Aorta (tissue), 5 donors: ENCODE measurements at regions of chr5 and their contacts with region 1.

Region 1: GRCh38 chr5:67209142-67209771 is 12.7 kb upstream of the CD180 start:
- DNase-seq: peak in 1 of 2 donors; percentile 64
- ATAC-seq: peak; percentile 85
- H3K4me3 ChIP-seq: no peak overlapping the region
- H3K27ac ChIP-seq: no peak overlapping the region
- H3K4me1 ChIP-seq: no peaks in the 10 kb centered on the region
- H3K27me3 ChIP-seq: no peaks in the 10 kb centered on the region

Region 2: DNA sequence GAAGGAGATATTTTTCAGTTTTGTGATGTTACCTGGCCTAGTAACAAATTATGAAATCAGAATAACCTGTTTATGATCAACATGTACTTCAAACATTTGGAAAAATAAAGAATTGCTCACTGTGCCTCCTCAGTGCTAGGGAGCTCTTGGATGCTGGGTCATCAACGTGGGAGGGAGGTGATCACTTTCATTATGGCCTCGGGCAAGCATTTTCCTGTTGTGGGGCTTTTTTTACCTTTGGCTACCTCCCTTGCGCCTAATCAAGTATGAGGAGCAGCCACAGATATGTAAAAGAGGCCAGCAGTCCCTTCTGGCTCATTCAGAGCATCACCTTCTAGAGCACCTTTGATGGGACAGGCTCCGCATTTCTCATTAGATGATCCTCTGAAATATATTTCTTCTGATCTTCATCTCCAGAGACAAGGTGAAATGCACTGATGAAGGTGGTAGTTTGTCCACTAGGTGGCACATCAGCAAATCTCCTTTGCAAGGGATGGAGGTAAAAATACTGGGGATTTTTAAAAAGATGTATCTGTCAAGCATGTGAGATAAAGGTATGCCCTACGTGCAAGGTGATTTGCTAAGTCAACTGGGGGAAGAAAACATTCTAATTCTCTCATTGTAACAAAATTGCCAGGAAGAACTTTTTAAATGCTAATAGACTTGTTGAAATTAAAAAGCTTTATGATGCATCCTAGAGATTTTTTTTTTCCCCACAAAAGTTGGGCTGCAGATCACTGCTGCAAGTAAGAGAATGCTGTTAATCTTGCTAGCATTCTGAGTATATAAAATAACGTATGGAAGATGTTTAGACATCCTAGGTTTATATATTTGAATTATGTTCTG is 394.9 kb before region 1 on chr5:
- intact Hi-C with region 1: loop called (anchors 2 kb)
- DNase-seq: no peak
- ATAC-seq: no peak
- H3K4me3 ChIP-seq: no peak overlapping the region
- H3K27ac ChIP-seq: no peak overlapping the region
- H3K4me1 ChIP-seq: no peaks in the 10 kb centered on the region
- H3K27me3 ChIP-seq: no peaks in the 10 kb centered on the region

Region 3: DNA sequence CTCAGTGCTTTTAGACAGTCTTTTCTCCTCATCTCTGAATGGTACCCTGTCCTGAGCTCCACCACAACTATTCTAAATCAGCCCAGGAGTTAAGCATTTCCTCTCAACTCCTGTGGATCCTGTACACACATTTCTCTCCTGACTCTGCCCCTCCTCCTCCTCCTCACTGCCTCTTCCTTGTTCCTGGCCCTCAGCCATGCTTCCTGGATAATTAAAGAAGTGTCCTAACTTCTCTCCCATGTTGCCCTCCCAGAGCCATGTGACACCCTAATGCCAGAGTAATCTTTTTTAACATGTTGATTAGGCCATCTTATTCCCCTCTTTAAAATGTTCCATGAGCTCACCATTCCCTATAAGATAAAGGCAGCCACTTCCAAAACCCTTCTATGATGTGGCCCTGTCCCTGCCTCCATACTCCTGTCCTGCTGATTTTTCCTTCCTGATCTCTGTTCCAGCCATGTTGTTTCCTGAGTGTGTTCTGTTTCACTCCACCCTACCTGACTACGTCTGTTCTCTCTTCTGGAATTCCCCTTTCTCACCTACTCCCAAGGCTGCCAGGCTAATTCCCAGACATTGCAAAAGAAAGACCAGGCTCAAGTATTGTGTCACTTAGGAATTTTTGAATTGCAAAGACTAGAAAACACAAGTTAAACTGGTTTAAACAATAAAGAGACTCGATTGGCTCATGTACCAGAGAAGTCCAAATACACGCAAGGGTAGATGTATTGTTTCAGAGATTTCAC is 317.9 kb before region 1 on chr5:
- intact Hi-C with region 1: no loop called
- DNase-seq: no peak
- ATAC-seq: no peak
- H3K4me3 ChIP-seq: no peak overlapping the region
- H3K27ac ChIP-seq: no peak overlapping the region
- H3K4me1 ChIP-seq: no peaks in the 10 kb centered on the region
- H3K27me3 ChIP-seq: no peaks in the 10 kb centered on the region

Region 4: GRCh38 chr5:67156976-67157583 is 52.2 kb before region 1 on chr5:
- intact Hi-C with region 1: loop called (anchors 2 kb)
- DNase-seq: no peak
- ATAC-seq: peak; percentile 60
- H3K4me3 ChIP-seq: no peak overlapping the region
- H3K27ac ChIP-seq: no peak overlapping the region
- H3K4me1 ChIP-seq: no peaks in the 10 kb centered on the region
- H3K27me3 ChIP-seq: no peaks in the 10 kb centered on the region